Activated B cell treated with CpG ODN at 0.5 μM for 24 hours (primary cell): ENCODE measurements at regions of chr3 and their contacts with region 1.

Region 1: GRCh38 chr3:191263365-191263764 is 64.3 kb downstream of the OSTN start:
- DNase-seq: no peak
- ATAC-seq: peak; percentile 59
- H3K4me3 Mint-ChIP-seq: peak overlapping the region; percentile 33
- H3K27ac Mint-ChIP-seq: peak overlapping the region; percentile 81
- H3K4me1 Mint-ChIP-seq: peaks cover 62% of the 10 kb centered on the region
- H3K27me3 Mint-ChIP-seq: no peaks in the 10 kb centered on the region
- CTCF ChIP-seq: no peak

Region 2: GRCh38 chr3:191237047-191237816 is 26.1 kb before region 1 on chr3:
- CTCF ChIA-PET with region 1: no interaction called
- POLR2A ChIA-PET with region 1: no interaction called
- intact Hi-C with region 1: no loop called
- DNase-seq: no peak
- ATAC-seq: no peak
- H3K4me3 Mint-ChIP-seq: no peak overlapping the region
- H3K27ac Mint-ChIP-seq: peak overlapping the region; percentile 14
- H3K4me1 Mint-ChIP-seq: peaks cover 42% of the 10 kb centered on the region
- H3K27me3 Mint-ChIP-seq: no peaks in the 10 kb centered on the region
- CTCF ChIP-seq: no peak

Region 3: GRCh38 chr3:191253089-191253799 is 10.1 kb before region 1 on chr3:
- CTCF ChIA-PET with region 1: no interaction called
- POLR2A ChIA-PET with region 1: interaction called, 4 read pairs
- intact Hi-C with region 1: loop called (anchors 1 kb)
- DNase-seq: no peak
- ATAC-seq: peak; percentile 49
- H3K4me3 Mint-ChIP-seq: peak overlapping the region; percentile 71
- H3K27ac Mint-ChIP-seq: peak overlapping the region; percentile 89
- H3K4me1 Mint-ChIP-seq: peaks cover 64% of the 10 kb centered on the region
- H3K27me3 Mint-ChIP-seq: no peaks in the 10 kb centered on the region
- CTCF ChIP-seq: no peak

Region 4: GRCh38 chr3:191282262-191283215 is 19.2 kb after region 1 on chr3:
- CTCF ChIA-PET with region 1: interaction called, 3 read pairs
- POLR2A ChIA-PET with region 1: interaction called, 3 read pairs
- intact Hi-C with region 1: loop called (anchors 1 kb)
- DNase-seq: no peak
- ATAC-seq: no peak
- H3K4me3 Mint-ChIP-seq: no peak overlapping the region
- H3K27ac Mint-ChIP-seq: no peak overlapping the region
- H3K4me1 Mint-ChIP-seq: peaks cover 15% of the 10 kb centered on the region
- H3K27me3 Mint-ChIP-seq: no peaks in the 10 kb centered on the region
- CTCF ChIP-seq: no peak

Region 5: GRCh38 chr3:192284443-192285087 is 1021.2 kb after region 1 on chr3:
- CTCF ChIA-PET with region 1: no interaction called
- POLR2A ChIA-PET with region 1: no interaction called
- intact Hi-C with region 1: no loop called
- DNase-seq: no peak
- ATAC-seq: no peak
- H3K4me3 Mint-ChIP-seq: no peak overlapping the region
- H3K27ac Mint-ChIP-seq: no peak overlapping the region
- H3K4me1 Mint-ChIP-seq: no peaks in the 10 kb centered on the region
- H3K27me3 Mint-ChIP-seq: peaks cover 2% of the 10 kb centered on the region
- CTCF ChIP-seq: no peak